ENCODE measurements at regions of chr18 and their contacts with region 1.

Region 1: GRCh38 chr18:2655178-2655953 is at the start of gene SMCHD1:
- DNase-seq: peak; percentile 74 to 96 (median 91)

Region 2: DNA sequence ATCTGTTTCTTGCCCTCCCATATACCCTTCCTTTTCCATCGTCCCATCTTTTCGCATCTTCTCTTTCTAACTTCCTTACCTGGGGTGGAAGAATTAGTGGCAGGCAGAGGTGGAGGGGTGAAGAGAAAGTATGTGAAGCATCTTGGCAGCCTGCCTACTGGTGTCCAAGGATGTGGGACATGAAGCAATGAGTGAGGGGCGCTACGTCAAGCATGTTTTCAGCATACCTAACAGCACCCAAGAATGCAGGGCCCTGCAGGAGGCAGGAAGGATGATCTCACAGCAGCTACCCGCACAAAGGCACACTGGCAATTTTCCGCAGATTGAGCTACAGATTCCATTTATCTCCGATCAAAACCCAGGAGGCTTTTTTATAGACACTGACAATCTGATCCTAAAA is 126.2 kb before region 1 on chr18:
- intact Hi-C with region 1: no loop called
- DNase-seq: no peak

Region 3: DNA sequence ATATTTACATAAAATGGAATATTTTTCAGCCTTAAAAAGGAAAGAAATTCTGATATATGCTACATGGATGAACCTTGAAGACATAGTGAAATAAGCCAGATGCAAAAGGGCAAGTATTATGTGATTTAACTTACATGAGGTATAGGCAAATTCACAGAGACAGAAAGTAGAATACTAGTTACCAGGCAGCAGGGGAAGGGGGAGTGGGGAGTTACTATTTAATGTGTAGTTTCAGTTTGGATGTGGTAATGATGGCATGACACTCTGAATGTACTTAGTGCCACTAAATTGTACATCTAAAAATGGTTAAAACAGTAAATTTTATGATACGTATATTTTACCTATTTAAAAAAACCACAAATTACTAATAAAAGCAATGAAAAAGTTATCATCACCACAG is 96.1 kb before region 1 on chr18:
- intact Hi-C with region 1: no loop called
- DNase-seq: no peak

Region 4: DNA sequence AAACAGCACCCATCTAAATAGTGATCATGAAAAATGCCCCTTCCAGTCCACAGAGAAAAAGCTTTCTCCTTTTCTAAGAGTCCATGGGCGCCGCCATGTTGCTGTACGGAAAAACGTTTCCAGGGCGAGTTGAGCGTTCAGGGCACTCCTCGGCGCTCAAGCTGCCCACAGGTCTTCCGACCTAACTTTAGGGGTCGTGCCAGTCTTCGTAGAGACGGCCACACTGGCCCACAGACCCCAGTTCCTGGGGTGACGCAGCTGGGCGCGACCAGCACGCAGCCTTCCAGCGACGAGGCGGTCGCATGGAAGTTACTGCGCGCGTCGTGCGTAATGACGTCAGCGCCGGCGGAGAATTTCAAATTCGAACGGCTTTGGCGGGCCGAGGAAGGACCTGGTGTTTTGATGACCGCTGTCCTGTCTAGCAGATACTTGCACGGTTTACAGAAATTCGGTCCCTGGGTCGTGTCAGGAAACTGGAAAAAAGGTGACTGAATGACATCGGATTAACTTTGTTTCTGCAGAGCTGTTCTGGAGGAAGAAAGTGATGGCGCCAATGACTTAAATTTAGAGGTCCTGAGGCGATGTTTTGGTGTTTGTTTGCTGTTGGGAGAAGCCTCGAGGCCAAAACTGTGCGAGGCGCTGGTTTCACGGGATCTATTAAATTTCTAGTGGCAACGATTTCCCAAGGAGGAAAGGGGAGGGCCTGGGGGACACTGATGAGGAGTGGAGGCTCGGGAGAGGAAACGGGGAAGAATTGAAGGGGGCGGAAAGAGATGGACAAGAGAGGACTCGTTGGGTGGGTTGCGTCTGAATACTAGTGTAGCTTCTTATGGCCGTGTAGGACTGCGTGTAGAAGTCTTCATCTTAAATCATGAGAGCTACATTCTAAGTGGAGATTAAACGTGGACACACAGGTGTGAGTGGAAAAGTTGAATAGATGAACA is 83.9 kb before region 1 on chr18 and contains the starts of genes METTL4 and NDC80:
- intact Hi-C with region 1: loop called (anchors 5 kb)
- DNase-seq: peak; percentile 64 to 92 (median 84)

Region 5: GRCh38 chr18:2741651-2742050 is 86.3 kb after region 1 on chr18:
- intact Hi-C with region 1: no loop called
- DNase-seq: no peak

Region 6: GRCh38 chr18:2920546-2921343 is 265.4 kb after region 1 on chr18:
- intact Hi-C with region 1: no loop called
- DNase-seq: peak in 11 of 42 donors; percentile 9 to 70 (median 42)